GM10248 (cell line): ENCODE measurements at regions of chr7 and their contacts with region 1.

Region 1: GRCh38 chr7:123871998-123872867 is 27.3 kb downstream of the HYAL4 start:
- DNase-seq: peak; percentile 35
- CTCF ChIP-seq: peak; percentile 79

Region 2: DNA sequence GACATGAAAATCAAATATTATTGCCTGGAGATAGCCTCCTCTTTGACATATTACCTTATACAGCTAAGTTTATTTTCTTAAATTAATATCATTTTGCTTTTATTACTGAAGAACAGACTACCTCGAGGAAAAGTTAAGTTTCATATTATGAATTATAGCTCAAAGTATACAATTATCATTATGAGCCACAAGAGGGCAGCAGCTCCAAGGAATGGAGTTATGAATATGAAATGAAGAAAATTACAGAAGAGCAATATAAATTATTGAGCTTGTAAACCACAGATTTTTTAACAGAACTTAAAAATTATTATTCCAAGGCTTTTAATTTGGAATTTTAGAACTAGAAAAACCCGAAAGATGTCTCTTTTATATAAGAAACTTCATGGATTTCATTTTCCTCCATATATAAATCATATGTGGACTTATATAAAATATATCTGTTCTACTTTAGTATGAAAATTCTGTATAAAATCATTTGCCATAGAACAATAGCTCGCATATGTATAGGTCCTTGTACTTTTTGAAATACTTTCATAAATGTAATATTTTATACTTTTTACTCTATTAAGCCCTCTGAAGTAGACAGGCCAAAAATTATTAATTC is 377.9 kb before region 1 on chr7:
- CTCF ChIA-PET with region 1: interaction called, 38 read pairs
- POLR2A ChIA-PET with region 1: no interaction called
- DNase-seq: peak; percentile 26
- CTCF ChIP-seq: peak; percentile 81

Region 3: DNA sequence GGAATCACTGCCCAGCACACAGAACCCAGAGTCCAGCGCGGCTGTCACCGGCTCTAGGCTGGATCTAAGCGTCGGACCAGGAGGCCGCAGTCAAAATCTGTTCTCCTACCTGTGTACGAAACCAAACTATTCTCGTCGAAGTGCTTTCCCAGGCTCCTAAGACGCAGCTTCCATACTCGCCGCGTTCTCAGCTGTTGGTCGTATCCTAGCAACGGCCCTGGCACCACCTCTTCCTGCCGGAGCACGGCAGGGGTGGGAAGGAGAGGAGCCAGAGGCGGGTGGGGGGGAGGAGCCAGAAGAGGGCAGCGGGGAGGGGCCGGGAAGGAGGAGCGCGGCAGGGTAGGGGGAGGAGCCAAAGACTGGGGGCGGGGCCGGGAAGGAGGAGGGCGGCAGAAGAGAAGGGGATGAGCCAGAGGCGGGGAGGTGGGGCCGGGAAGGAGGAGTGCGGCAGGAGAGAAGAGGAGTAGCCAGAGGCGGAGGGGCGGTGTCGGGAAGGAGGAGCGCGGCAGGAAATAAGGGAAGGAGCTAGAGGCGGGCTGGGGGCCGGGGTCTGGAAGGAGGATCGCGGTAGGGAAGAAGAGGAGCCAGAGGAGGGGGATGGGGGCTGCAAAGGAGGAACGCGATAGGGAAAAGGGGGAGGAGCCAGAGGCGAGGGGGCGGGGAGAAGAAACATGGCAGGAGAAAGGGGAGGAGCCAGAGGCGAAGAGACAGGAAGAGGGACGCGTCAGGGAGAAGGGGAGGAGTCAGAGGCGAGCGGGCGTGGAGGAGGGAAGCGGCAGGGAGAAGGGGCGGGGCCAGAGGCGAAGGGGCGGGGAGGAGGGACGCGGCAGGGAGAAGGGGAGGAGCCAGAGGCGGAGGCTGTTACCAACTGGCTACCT is 337.6 kb before region 1 on chr7 and contains the start of gene IQUB:
- CTCF ChIA-PET with region 1: no interaction called
- POLR2A ChIA-PET with region 1: no interaction called
- DNase-seq: peak; percentile 95
- CTCF ChIP-seq: no peak

Region 4: GRCh38 chr7:123635551-123636359 is 236.5 kb before region 1 on chr7:
- CTCF ChIA-PET with region 1: interaction called, 15 read pairs
- POLR2A ChIA-PET with region 1: no interaction called
- DNase-seq: no peak
- CTCF ChIP-seq: peak; percentile 36

Region 5: GRCh38 chr7:123666492-123666891 is 205.7 kb before region 1 on chr7:
- CTCF ChIA-PET with region 1: no interaction called
- POLR2A ChIA-PET with region 1: no interaction called
- DNase-seq: no peak
- CTCF ChIP-seq: no peak

Region 6: GRCh38 chr7:123705211-123705901 is 166.9 kb before region 1 on chr7:
- CTCF ChIA-PET with region 1: interaction called, 10 read pairs
- POLR2A ChIA-PET with region 1: no interaction called
- DNase-seq: no peak
- CTCF ChIP-seq: no peak

Region 7: GRCh38 chr7:123888192-123888591 is 16.0 kb after region 1 on chr7:
- CTCF ChIA-PET with region 1: interaction called, 14 read pairs
- POLR2A ChIA-PET with region 1: interaction called, 3 read pairs
- DNase-seq: no peak
- CTCF ChIP-seq: no peak

Region 8: DNA sequence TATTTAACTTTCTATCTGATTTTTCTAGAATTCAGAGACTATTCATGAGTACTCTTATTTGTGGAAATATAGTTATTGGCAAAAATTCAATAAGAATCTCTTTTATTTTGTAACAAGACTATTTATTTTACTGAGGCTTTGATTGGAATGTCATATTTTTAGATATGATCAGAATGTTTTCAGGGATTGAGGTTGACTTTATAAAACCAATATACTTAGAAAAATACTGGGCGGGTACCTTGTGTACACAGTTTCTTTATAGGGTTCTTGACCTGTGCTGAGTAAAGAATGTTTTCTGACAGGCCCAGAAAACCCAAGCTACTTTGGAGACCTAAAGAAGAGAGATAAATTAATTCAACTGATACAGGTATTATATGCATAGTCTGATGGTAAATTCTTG is 28.8 kb after region 1 on chr7:
- CTCF ChIA-PET with region 1: no interaction called
- POLR2A ChIA-PET with region 1: no interaction called
- DNase-seq: no peak
- CTCF ChIP-seq: no peak

Region 9: DNA sequence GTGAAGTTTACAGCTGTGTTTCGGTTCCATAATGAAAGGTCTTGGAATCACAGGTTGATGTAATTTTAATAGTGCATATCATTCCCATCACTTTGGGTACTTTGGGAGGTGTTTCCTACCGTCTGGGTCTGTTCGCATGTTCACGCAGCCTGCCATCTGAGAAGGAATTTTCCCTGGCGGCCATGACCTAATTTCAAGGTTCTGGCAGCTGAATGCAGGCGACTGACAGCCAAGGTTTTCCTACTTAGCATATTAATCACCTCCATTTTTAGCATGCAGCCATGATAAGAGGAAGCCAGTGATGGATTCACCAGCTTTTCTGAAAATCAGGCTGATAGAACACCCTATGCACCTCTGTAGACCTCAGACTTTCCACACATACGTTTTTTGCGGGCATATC is 479.7 kb after region 1 on chr7:
- CTCF ChIA-PET with region 1: no interaction called
- POLR2A ChIA-PET with region 1: no interaction called
- DNase-seq: no peak
- CTCF ChIP-seq: no peak